GM10248 (cell line): ENCODE measurements at regions of chr1 and their contacts with region 1.

Region 1: DNA sequence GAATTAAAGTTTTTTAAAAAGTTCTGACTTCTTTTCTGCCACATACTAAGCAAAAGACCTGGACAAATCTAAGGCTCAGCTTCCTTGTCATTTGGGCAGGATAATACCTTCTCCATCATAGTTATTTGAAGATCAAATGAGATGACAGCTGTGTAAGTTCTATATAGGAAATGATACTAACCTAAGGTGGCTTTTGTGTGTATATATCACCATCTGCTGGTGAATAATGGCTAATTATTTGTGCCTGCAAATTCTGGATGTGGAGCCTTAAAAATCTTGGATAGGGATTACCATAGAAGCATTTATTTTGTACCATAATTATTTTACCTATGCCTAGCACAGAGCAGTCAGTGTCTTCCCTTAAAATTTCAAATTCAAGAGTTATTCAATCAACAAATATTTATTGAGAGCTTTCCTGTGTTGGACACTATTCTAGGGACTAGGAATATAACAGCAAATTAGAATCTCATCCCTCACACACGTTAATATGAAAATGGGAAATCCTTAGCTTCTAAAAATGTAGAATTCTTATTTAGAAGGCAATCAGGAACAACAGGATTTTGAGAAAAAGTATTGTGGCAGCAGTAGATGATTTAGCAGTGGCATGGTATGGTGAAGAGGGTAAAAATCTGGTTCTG is 89.8 kb downstream of the TMEM200B start:
- DNase-seq: peak; percentile 62
- CTCF ChIP-seq: peak; percentile 64

Region 2: DNA sequence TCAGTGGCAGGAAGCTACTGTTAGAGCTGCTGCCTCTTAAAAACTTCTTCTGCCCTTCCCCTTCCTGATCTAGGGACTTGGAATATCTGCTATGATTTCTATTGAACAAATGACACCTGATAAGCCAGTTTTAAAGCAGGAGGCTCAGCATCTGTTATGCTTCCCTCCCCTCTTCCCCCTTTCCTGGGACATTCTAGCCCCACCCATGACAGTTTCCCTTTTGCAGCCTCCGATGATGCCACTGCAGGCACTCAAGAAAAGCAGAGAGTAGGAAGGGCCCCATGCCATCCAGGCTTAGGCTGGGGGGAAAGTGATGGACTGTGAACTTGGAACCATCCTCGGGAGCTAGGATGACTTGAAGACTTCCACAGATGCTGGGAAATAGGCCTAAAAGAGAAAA is 134.7 kb before region 1 on chr1:
- CTCF ChIA-PET with region 1: interaction called, 13 read pairs
- POLR2A ChIA-PET with region 1: no interaction called
- DNase-seq: no peak
- CTCF ChIP-seq: no peak

Region 3: GRCh38 chr1:29017235-29017634 is 16.7 kb before region 1 on chr1:
- CTCF ChIA-PET with region 1: interaction called, 57 read pairs
- POLR2A ChIA-PET with region 1: no interaction called
- DNase-seq: no peak
- CTCF ChIP-seq: no peak

Region 4: DNA sequence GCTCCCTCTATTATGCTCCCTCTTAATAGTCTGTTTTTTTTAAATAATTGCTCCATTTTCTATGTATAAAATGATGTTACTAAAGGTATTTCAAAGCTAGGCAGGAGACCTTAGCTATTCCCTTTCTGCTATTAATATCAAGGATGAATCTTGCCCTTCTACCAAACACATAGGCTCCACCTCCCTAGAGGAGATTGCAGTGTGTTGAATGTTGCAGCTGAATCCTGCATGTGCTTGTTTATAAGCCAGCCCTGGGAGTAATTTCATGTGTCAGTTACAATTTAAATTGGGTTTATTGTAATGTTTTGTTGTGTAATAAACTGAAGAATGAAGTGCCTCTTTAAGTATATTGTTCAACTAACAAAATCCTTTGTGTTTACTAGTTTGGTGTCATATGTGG is 23.8 kb after region 1 on chr1:
- CTCF ChIA-PET with region 1: interaction called, 16 read pairs
- POLR2A ChIA-PET with region 1: no interaction called
- DNase-seq: no peak
- CTCF ChIP-seq: no peak